ENCODE measurements at regions of chr4 and their contacts with region 1.

Region 1: DNA sequence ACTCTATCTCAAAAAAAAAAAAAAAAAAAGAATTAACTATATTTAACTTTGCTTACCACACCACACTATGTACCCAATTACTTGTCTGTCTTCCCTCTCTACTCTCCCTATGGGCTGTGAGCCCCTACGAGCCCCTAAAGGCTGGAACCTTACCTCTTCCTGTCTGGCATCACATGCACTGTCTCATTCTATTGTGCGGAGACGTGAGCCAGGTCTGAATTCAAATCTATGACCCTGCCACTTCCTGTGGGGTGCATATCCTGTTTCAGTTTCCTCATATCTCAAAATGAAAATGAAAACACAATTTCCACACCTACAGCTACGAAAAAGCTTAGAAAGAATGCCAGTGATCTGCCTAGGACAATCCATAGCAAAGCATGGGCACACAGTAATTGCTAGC is 42.9 kb upstream of the HS3ST1 start:
- DNase-seq: no peak
- ATAC-seq: peak; percentile 87
- H3K4me3 Mint-ChIP-seq: peak overlapping the region; percentile 81
- H3K27ac Mint-ChIP-seq: peak overlapping the region; percentile 96
- H3K4me1 Mint-ChIP-seq: peaks cover 56% of the 10 kb centered on the region
- H3K27me3 Mint-ChIP-seq: no peaks in the 10 kb centered on the region
- CTCF ChIP-seq: no peak

Region 2: GRCh38 chr4:10677796-10678497 is 793.7 kb before region 1 on chr4:
- CTCF ChIA-PET with region 1: no interaction called
- POLR2A ChIA-PET with region 1: no interaction called
- intact Hi-C with region 1: loop called (anchors 2 kb)
- DNase-seq: no peak
- ATAC-seq: peak; percentile 77
- H3K4me3 Mint-ChIP-seq: peak overlapping the region; percentile 60
- H3K27ac Mint-ChIP-seq: peak overlapping the region; percentile 71
- H3K4me1 Mint-ChIP-seq: peaks cover 35% of the 10 kb centered on the region
- H3K27me3 Mint-ChIP-seq: no peaks in the 10 kb centered on the region
- CTCF ChIP-seq: no peak

Region 3: DNA sequence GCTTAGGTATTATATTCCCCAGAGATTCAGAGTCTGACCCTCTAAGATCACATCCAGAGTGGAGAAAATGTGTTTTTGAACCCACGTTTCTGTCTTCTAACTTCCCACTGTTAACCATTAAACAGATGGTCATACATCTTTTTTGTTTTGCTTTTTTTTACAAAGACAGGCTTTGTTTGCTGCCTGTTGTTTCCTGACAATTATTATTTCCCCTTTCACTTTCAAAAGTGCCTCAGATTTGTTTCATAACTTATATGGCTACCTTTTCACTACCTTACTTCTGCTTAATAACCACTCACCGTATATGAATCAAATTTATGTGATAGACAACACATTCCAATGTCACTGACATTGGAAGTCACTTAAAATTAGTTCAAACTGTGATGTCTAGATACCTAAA is 185.1 kb before region 1 on chr4:
- CTCF ChIA-PET with region 1: no interaction called
- POLR2A ChIA-PET with region 1: no interaction called
- intact Hi-C with region 1: loop called (anchors 5 kb)
- DNase-seq: no peak
- ATAC-seq: peak; percentile 50
- H3K4me3 Mint-ChIP-seq: peak overlapping the region; percentile 36
- H3K27ac Mint-ChIP-seq: peak overlapping the region; percentile 66
- H3K4me1 Mint-ChIP-seq: peaks cover 19% of the 10 kb centered on the region
- H3K27me3 Mint-ChIP-seq: no peaks in the 10 kb centered on the region
- CTCF ChIP-seq: no peak

Region 4: GRCh38 chr4:11436673-11437072 is 34.9 kb before region 1 on chr4:
- CTCF ChIA-PET with region 1: interaction called, 7 read pairs
- POLR2A ChIA-PET with region 1: interaction called, 8 read pairs
- intact Hi-C with region 1: loop called (anchors 1 kb)
- DNase-seq: no peak
- ATAC-seq: peak; percentile 58
- H3K4me3 Mint-ChIP-seq: peak overlapping the region; percentile 73
- H3K27ac Mint-ChIP-seq: peak overlapping the region; percentile 82
- H3K4me1 Mint-ChIP-seq: peaks cover 74% of the 10 kb centered on the region
- H3K27me3 Mint-ChIP-seq: no peaks in the 10 kb centered on the region
- CTCF ChIP-seq: no peak

Region 5: GRCh38 chr4:11514779-11515419 is 43.3 kb after region 1 on chr4:
- CTCF ChIA-PET with region 1: no interaction called
- POLR2A ChIA-PET with region 1: no interaction called
- intact Hi-C with region 1: no loop called
- DNase-seq: no peak
- ATAC-seq: no peak
- H3K4me3 Mint-ChIP-seq: no peak overlapping the region
- H3K27ac Mint-ChIP-seq: no peak overlapping the region
- H3K4me1 Mint-ChIP-seq: peaks cover 3% of the 10 kb centered on the region
- H3K27me3 Mint-ChIP-seq: peaks cover 7% of the 10 kb centered on the region
- CTCF ChIP-seq: no peak

Measured in activated B cell treated with CpG ODN at 0.5 μM for 24 hours (primary cell).